ENCODE measurements at regions of chr6 and their contacts with region 1.

Region 1: DNA sequence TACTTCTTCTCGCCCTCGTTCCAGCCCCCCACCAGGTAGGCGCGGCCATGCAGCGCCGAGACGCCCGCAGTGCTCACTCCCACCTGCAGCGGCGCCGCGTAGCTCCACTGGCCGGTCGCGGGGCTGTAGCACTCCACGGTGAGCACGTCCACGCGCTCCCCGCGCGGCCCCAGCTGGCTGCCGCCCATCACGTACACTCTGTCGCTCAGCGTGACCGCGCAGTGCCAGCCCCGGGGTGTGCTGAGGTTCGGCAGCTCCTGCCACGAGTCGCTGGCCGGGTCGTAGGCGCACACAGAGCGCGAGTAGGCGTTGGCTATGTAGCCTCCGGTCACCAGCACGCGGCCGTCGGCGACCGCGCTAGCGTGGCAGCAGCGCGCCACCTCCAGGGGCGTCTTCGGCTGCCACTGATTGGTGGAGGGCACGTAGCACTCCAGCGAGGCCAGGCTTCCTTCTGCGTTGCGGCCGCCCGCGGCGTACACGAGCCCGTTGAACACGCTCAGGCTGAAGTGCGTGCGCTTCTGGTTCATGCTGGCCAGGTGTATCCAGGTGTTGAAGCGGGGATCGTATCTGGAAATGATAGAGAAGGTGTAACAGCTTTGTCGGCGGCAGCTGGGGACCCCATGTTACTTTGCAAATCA is 13.7 kb downstream of the KLHL31 start:
- DNase-seq: peak; percentile 85
- H3K4me3 ChIP-seq: peak overlapping the region; percentile 45 to 68 (median 65)
- H3K27ac ChIP-seq: peak overlapping the region; percentile 83
- H3K4me1 ChIP-seq: peaks cover 26% of the 10 kb centered on the region
- H3K27me3 ChIP-seq: no peaks in the 10 kb centered on the region
- CTCF ChIP-seq: peak in 1 of 2 donors; percentile 42

Region 2: DNA sequence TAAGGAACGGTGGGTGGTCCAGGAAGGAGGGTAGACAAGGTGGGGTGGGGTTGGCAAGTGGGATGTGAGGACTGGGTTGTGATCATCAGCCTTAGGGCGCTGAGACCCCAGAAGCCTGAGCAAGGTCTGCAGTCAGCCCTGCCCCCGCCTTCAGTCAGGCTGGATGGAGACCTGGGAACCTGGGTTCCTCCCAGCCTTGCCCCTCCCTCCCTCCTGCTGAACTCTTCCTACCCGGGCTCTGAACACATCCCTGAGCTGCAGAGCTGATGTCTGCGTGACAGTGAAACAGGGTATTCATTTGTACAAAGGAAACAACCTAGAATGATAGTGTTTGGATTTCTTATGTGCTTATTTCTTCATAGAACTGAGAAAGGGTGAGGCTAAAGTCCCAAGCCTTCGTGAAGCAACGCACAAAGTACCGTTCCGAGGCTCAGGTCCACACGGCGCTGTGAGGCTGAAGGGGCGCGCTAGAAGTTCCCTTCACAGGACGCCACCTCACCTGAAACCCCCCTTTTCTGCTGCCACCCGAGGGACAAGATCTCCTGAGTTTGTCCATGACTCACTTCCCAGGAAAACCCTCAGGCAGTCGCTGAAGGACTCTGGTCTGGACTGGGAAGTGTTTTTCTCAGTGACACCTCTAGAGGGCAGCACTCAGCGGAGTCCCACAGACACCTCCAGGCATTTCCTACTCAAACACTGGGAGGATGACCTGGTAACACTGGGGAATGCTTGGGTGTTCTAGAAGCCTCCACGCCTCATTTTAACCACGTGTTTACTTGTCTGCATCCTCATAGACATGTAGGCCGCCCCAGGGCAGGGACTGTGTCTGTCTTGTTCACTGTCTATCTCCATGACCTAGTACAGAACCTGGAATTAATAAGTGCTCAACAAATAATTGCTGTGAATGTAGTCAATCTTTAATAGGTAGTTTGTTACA is 812.5 kb before region 1 on chr6:
- CTCF ChIA-PET with region 1: no interaction called
- dilution Hi-C with region 1: no loop called
- in situ Hi-C with region 1: no loop called
- intact Hi-C with region 1: no loop called
- DNase-seq: peak; percentile 58
- H3K4me3 ChIP-seq: no peak overlapping the region
- H3K27ac ChIP-seq: no peak overlapping the region
- H3K4me1 ChIP-seq: no peaks in the 10 kb centered on the region
- H3K27me3 ChIP-seq: no peaks in the 10 kb centered on the region
- CTCF ChIP-seq: peak; percentile 57 to 64

Region 3: DNA sequence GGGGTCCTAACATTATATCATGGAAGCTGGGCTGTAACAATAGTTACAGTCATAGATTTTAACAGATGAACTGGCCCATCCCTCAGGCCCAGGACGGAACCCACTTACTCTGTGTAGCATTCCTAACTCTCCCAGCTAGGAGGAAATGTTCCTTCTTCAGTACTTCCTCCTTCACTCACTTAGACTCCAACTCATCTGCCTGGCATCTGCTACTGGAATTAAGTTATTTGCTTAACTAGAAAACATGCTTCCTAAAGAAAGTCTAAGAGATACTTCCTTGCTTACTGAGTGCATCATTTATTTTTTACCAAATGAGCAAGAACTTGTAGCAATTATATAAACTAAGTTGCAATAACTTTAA is 127.4 kb before region 1 on chr6:
- CTCF ChIA-PET with region 1: no interaction called
- dilution Hi-C with region 1: loop called (anchors 10 kb)
- in situ Hi-C with region 1: no loop called
- intact Hi-C with region 1: no loop called
- DNase-seq: no peak
- H3K4me3 ChIP-seq: no peak overlapping the region
- H3K27ac ChIP-seq: no peak overlapping the region
- H3K4me1 ChIP-seq: peaks cover 22% of the 10 kb centered on the region
- H3K27me3 ChIP-seq: no peaks in the 10 kb centered on the region
- CTCF ChIP-seq: no peak

Region 4: DNA sequence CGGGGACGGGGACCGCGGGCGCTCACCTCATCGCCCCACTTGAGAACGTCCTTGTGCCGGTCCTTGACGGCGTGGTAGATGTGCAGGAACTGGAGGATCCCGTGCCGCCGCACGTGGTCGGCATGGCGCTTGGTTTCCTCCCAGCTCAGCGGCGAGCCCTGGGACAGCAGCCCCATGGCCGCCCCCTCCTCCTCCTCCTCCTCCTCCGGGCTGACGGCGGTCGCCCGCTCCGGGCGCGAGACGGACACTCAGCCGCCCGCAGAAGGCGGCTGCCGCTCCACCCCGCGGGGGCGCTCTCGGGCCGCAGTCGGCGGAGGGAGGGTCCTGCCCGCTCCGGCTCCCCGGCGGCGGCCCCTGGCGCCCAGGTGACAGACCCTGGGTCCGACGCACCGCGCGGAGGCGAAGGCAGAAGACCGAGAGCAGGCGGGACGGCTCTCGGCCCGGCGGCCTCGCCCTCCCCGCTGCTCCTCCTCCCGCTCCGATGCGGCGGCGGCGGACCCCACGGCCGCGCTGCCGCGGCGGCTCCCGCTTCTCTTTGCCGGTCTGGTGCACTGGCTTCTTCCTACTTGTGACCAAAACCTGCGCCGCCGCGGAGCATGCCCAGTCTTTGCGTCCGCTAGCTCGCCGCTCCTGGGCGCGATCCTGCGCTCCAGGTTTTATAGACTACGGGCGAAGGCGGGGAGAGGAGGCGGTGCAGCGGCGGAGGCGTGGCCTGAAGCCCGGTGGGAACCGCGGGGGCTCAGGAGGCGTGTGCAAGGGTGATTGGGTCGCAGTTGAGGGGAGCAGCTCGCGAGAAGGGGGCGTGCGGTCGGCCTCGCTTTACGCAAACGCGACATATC is 107.2 kb before region 1 on chr6 and contains the start of gene GCLC:
- CTCF ChIA-PET with region 1: interaction called, 8 read pairs
- dilution Hi-C with region 1: no loop called
- in situ Hi-C with region 1: loop called in 1 of 2 experiments (anchors 5 kb)
- intact Hi-C with region 1: loop called (anchors 1 kb)
- DNase-seq: peak; percentile 94
- H3K4me3 ChIP-seq: peak within 1 kb of the TSS; percentile 73 to 87 (median 79)
- H3K27ac ChIP-seq: peak within 1 kb of the TSS; percentile 85
- H3K4me1 ChIP-seq: peaks cover 23% of the 10 kb centered on the region
- H3K27me3 ChIP-seq: no peaks in the 10 kb centered on the region
- CTCF ChIP-seq: peak; percentile 26 to 55
- total RNA-seq, gene GCLC: 94.7 to 128 TPM

Region 5: GRCh38 chr6:53628354-53629119 is 23.3 kb before region 1 on chr6:
- CTCF ChIA-PET with region 1: no interaction called
- dilution Hi-C with region 1: no loop called
- in situ Hi-C with region 1: no loop called
- intact Hi-C with region 1: loop called (anchors 1 kb)
- DNase-seq: peak; percentile 94
- H3K4me3 ChIP-seq: peak overlapping the region; percentile 4 to 37 (median 14)
- H3K27ac ChIP-seq: peak overlapping the region; percentile 99
- H3K4me1 ChIP-seq: peaks cover 42% of the 10 kb centered on the region
- H3K27me3 ChIP-seq: no peaks in the 10 kb centered on the region
- CTCF ChIP-seq: no peak

Region 6: DNA sequence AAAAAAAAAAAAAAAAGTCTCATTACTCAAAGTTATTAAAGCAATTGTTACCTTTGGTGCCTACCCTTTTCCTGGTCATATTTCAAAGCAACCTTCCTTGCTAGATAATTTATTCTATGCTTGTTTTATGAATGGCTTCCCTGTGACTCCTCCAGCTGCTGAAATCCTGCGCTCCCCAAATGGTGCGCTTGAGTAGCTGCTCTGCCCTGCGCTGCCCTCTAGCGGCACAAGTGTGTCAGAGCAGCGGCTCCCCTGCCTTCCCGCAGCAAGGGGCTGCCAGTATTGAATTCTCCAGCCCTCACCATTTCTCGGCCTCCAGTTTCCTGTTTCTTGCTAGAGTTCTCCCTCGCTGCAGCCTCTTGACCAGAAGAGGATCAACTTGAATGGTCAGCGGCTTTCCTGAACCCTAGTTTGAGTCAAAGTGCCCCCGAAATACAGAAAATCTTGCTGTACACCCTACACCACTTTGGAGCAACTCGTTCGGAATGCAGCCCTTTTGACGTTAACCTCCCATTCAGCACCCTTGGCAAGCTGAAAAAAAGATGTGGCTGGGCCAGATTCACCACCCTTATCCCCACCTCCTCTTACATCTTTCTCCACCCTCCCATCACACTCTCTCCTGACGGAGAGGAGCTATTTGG is 74.0 kb after region 1 on chr6:
- CTCF ChIA-PET with region 1: no interaction called
- dilution Hi-C with region 1: no loop called
- in situ Hi-C with region 1: no loop called
- intact Hi-C with region 1: loop called (anchors 1 kb)
- DNase-seq: peak; percentile 48
- H3K4me3 ChIP-seq: no peak overlapping the region
- H3K27ac ChIP-seq: no peak overlapping the region
- H3K4me1 ChIP-seq: peaks cover 3% of the 10 kb centered on the region
- H3K27me3 ChIP-seq: no peaks in the 10 kb centered on the region
- CTCF ChIP-seq: peak; percentile 98 to 99